ENCODE measurements at regions of chr17 and their contacts with region 1.

Region 1: DNA sequence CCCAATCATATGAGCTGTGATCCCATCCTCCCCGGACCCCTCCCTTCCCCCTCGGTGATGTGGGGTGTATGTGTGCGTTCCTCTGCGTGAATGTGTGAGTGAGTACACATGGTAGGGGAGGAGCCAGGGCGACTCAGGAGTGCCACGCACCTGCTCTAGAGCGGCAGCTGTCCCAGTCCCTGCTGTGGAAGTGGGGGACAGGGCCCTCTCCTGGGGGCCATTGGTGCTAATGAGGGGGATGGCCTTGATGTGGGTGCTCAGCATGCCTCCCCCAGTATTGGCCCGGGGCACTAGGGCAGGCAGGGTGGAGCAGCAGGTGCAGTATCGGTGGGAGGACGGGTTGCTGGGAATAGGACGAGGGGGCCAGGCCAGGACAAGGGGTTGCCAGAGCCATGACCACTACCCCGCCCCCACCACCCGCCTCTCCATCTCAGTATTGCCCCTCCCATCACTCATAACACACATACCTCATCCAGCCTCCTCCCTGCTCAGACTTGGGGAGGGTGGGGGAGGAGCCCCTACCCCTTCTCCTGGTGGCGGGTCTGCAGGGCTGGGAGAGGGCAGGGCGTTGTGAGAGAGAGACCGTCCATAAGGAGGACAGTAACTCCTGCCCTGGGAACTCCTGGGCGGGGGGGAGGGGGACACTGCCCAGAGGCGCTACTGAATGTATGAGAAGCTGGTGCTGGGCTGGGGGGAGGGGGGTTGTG is 8.5 kb downstream of the NR1D1 start:
- DNase-seq: no peak
- H3K4me3 ChIP-seq: no peak overlapping the region
- H3K27ac ChIP-seq: no peak overlapping the region
- H3K4me1 ChIP-seq: peaks cover 0 to 27% (median 4%) of the 10 kb centered on the region in 4 experiments; a peak in 6 of 7 replicates
- H3K27me3 ChIP-seq: no peaks in the 10 kb centered on the region
- CTCF ChIP-seq: no peak
- EP300 ChIP-seq: no peak
- POLR2A ChIP-seq: no peak
- RAD21 ChIP-seq: no peak

Region 2: GRCh38 chr17:40005520-40005919 is 86.3 kb before region 1 on chr17:
- CTCF ChIA-PET with region 1: no interaction called
- POLR2A ChIA-PET with region 1: no interaction called
- DNase-seq: no peak
- H3K4me3 ChIP-seq: no peak overlapping the region
- H3K27ac ChIP-seq: no peak overlapping the region
- H3K4me1 ChIP-seq: no peaks in the 10 kb centered on the region
- H3K27me3 ChIP-seq: no peaks in the 10 kb centered on the region
- CTCF ChIP-seq: no peak
- EP300 ChIP-seq: no peak
- POLR2A ChIP-seq: no peak
- RAD21 ChIP-seq: no peak

Region 3: GRCh38 chr17:40038882-40039513 is 52.8 kb before region 1 on chr17:
- CTCF ChIA-PET with region 1: interaction called, 101 read pairs
- POLR2A ChIA-PET with region 1: interaction called, 3 read pairs
- DNase-seq: peak in 1 of 2 experiments; percentile 64
- H3K4me3 ChIP-seq: no peak overlapping the region
- H3K27ac ChIP-seq: no peak overlapping the region
- H3K4me1 ChIP-seq: peaks cover 0 to 12% (median 4%) of the 10 kb centered on the region in 4 experiments; a peak in 5 of 7 replicates
- H3K27me3 ChIP-seq: no peaks in the 10 kb centered on the region
- CTCF ChIP-seq: peak; percentile 69 to 78 (median 72)
- EP300 ChIP-seq: no peak
- POLR2A ChIP-seq: no peak
- RAD21 ChIP-seq: peak; percentile 49 to 70

Region 4: GRCh38 chr17:40191237-40192208 is 99.7 kb after region 1 on chr17:
- CTCF ChIA-PET with region 1: no interaction called
- POLR2A ChIA-PET with region 1: no interaction called
- DNase-seq: peak; percentile 70 to 87
- H3K4me3 ChIP-seq: peak overlapping the region; percentile 20 to 73 (median 44)
- H3K27ac ChIP-seq: no peak overlapping the region
- H3K4me1 ChIP-seq: peaks cover 0 to 15% (median 8%) of the 10 kb centered on the region in 4 experiments; a peak in 5 of 7 replicates
- H3K27me3 ChIP-seq: no peaks in the 10 kb centered on the region
- CTCF ChIP-seq: peak; percentile 58 to 73 (median 71)
- EP300 ChIP-seq: no peak
- POLR2A ChIP-seq: no peak
- RAD21 ChIP-seq: peak; percentile 32 to 60